Common myeloid progenitor, CD34-positive (primary cell): ENCODE measurements at regions of chr7 and their contacts with region 1.

Region 1: DNA sequence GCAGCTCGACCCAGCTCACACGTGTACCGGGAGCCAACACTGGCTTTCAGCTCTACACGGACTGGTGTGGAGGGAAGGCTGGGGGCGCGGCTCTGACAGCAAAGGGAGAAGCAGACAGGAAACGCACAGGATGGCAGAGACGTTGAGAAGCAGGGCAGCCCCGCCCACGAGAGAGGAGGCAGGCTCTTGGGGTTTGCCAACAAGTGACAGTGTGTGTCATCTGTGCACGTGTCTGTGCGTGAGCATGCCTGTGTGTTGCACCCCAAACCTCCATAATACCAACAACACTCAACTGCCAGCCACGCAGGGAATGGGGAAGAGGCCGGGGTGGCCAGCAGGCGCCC is 64.4 kb upstream of the PDGFA start:
- DNase-seq: peak in 2 of 3 donors; percentile 74 to 78
- H3K4me3 ChIP-seq: peak overlapping the region in 1 of 7 experiments; percentile 4
- H3K27ac ChIP-seq: no peak overlapping the region
- H3K4me1 ChIP-seq: peaks cover 0 to 9% (median 5%) of the 10 kb centered on the region in 4 experiments
- H3K27me3 ChIP-seq: no peaks in the 10 kb centered on the region

Region 2: GRCh38 chr7:601595-602340 is 17.7 kb after region 1 on chr7:
- CTCF ChIA-PET with region 1: interaction called, 3 read pairs
- POLR2A ChIA-PET with region 1: interaction called, 14 read pairs
- DNase-seq: peak; percentile 80 to 97 (median 93)
- H3K4me3 ChIP-seq: peak overlapping the region in 3 of 7 experiments; percentile 40 to 48 (median 40)
- H3K27ac ChIP-seq: peak overlapping the region; percentile 70 to 96
- H3K4me1 ChIP-seq: peaks cover 0 to 55% (median 52%) of the 10 kb centered on the region in 4 experiments
- H3K27me3 ChIP-seq: no peaks in the 10 kb centered on the region

Region 3: GRCh38 chr7:712381-713138 is 128.5 kb after region 1 on chr7:
- CTCF ChIA-PET with region 1: no interaction called
- POLR2A ChIA-PET with region 1: no interaction called
- DNase-seq: peak in 1 of 3 donors; percentile 32
- H3K4me3 ChIP-seq: peak overlapping the region in 5 of 7 experiments; percentile 23 to 60 (median 48)
- H3K27ac ChIP-seq: no peak overlapping the region
- H3K4me1 ChIP-seq: peaks cover 0 to 14% (median 6%) of the 10 kb centered on the region in 4 experiments
- H3K27me3 ChIP-seq: peaks cover 0 to 27% (median 5%) of the 10 kb centered on the region in 5 experiments